ENCODE measurements at regions of chr1 and their contacts with region 1.

Region 1: DNA sequence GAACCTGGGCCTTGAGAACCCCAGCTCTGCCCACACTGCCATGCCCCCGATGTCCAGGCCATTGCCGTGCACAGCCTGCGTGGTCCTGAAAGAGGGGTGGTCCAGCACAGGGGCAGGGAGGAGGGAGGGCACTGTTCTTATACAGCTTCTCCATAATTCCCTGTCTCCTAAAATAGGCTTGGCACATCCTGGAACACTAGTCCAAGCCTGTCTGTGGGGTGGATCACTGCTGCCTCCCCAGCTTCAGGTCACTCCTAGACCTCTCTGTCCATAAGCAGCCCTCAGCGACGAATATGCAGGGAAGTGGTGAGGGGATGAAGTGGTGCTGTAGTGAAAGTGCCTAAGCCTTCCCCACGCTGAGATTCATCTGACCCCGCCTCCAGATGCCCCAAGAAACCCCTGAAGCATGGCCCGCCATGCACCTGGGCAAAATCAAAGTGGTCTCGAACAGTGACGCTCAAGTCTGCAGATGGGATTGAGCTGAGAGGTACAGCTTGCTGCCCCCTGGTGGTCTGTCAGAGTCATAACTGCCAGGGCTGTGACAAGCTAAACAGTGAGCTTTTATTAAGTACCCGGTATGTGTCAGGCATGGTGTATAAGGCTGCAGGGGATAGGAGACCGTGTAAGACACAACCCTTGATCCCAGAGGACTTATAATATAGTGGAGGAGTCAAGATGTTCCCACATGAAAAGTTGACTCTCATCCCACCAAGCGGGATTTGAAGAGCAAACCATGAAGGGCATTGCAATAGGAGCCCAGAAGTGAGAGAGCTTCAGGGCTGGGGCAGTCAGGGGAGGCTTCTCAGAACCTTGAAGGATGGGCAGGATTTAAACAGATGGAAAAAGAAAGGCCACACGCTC is 66.6 kb downstream of the FAM163A start:
- DNase-seq: peak; percentile 74 to 82 (median 79)
- ATAC-seq: peak; percentile 80
- H3K4me3 ChIP-seq: no peak overlapping the region
- H3K27ac ChIP-seq: no peak overlapping the region
- H3K4me1 ChIP-seq: peaks cover 0 to 18% of the 10 kb centered on the region in 2 experiments; a peak in 4 of 5 replicates
- H3K27me3 ChIP-seq: peaks cover 49 to 83% of the 10 kb centered on the region in 2 experiments
- CTCF ChIP-seq: peak; percentile 87 to 97 (median 90)
- EP300 ChIP-seq: no peak
- POLR2A ChIP-seq: no peak
- RAD21 ChIP-seq: peak; percentile 59 to 78

Region 2: GRCh38 chr1:178768423-178768822 is 1041.3 kb before region 1 on chr1:
- CTCF ChIA-PET with region 1: no interaction called
- POLR2A ChIA-PET with region 1: no interaction called
- in situ Hi-C with region 1: no loop called
- intact Hi-C with region 1: loop called (anchors 5 kb)
- DNase-seq: peak; percentile 58 to 64 (median 62)
- ATAC-seq: peak; percentile 88
- H3K4me3 ChIP-seq: no peak overlapping the region
- H3K27ac ChIP-seq: no peak overlapping the region
- H3K4me1 ChIP-seq: no peaks in the 10 kb centered on the region
- H3K27me3 ChIP-seq: no peaks in the 10 kb centered on the region
- CTCF ChIP-seq: peak; percentile 78 to 93 (median 93)
- EP300 ChIP-seq: no peak
- POLR2A ChIP-seq: no peak
- RAD21 ChIP-seq: peak; percentile 74 to 81

Region 3: GRCh38 chr1:179251675-179252074 is 558.1 kb before region 1 on chr1:
- CTCF ChIA-PET with region 1: no interaction called
- POLR2A ChIA-PET with region 1: no interaction called
- in situ Hi-C with region 1: loop called (anchors 10 kb)
- intact Hi-C with region 1: loop called (anchors 10 kb)
- DNase-seq: peak in 2 of 4 experiments; percentile 28 to 44
- ATAC-seq: peak; percentile 84
- H3K4me3 ChIP-seq: no peak overlapping the region
- H3K27ac ChIP-seq: no peak overlapping the region
- H3K4me1 ChIP-seq: no peaks in the 10 kb centered on the region; a peak in 1 of 5 replicates
- H3K27me3 ChIP-seq: no peaks in the 10 kb centered on the region; a peak in 1 of 5 replicates
- CTCF ChIP-seq: peak; percentile 55 to 85 (median 56); a peak in 4 of 6 replicates
- EP300 ChIP-seq: no peak
- POLR2A ChIP-seq: no peak
- RAD21 ChIP-seq: peak; percentile 80 to 94

Region 4: GRCh38 chr1:179706339-179706941 is 103.3 kb before region 1 on chr1:
- CTCF ChIA-PET with region 1: interaction called, 22 read pairs
- POLR2A ChIA-PET with region 1: interaction called, 8 read pairs
- in situ Hi-C with region 1: no loop called
- intact Hi-C with region 1: loop called (anchors 1 kb)
- DNase-seq: peak; percentile 57 to 80 (median 62)
- ATAC-seq: peak; percentile 76
- H3K4me3 ChIP-seq: no peak overlapping the region
- H3K27ac ChIP-seq: no peak overlapping the region
- H3K4me1 ChIP-seq: no peaks in the 10 kb centered on the region
- H3K27me3 ChIP-seq: peaks cover 0 to 3% of the 10 kb centered on the region in 2 experiments; a peak in 2 of 5 replicates
- CTCF ChIP-seq: peak; percentile 86 to 98 (median 88)
- EP300 ChIP-seq: no peak
- POLR2A ChIP-seq: no peak
- RAD21 ChIP-seq: peak; percentile 94 to 95

Region 5: GRCh38 chr1:180178511-180179161 is 368.9 kb after region 1 on chr1:
- CTCF ChIA-PET with region 1: interaction called, 6 read pairs
- POLR2A ChIA-PET with region 1: interaction called, 5 read pairs
- in situ Hi-C with region 1: no loop called
- intact Hi-C with region 1: loop called (anchors 5 kb)
- DNase-seq: peak; percentile 78 to 82 (median 80)
- ATAC-seq: peak; percentile 68
- H3K4me3 ChIP-seq: no peak overlapping the region
- H3K27ac ChIP-seq: no peak overlapping the region
- H3K4me1 ChIP-seq: no peaks in the 10 kb centered on the region
- H3K27me3 ChIP-seq: no peaks in the 10 kb centered on the region
- CTCF ChIP-seq: peak; percentile 91 to 99 (median 98)
- EP300 ChIP-seq: 0 out of 2 replicates have a peak, but pooled peaks have one; percentile 16
- POLR2A ChIP-seq: no peak
- RAD21 ChIP-seq: peak; percentile 93 to 97

Measured in K562 (cell line).